ENCODE measurements at regions of chr1 and their contacts with region 1.

Region 1: GRCh38 chr1:86233403-86233802 is 76.8 kb upstream of the COL24A1 start:
- DNase-seq: no peak
- ATAC-seq: no peak

Region 2: DNA sequence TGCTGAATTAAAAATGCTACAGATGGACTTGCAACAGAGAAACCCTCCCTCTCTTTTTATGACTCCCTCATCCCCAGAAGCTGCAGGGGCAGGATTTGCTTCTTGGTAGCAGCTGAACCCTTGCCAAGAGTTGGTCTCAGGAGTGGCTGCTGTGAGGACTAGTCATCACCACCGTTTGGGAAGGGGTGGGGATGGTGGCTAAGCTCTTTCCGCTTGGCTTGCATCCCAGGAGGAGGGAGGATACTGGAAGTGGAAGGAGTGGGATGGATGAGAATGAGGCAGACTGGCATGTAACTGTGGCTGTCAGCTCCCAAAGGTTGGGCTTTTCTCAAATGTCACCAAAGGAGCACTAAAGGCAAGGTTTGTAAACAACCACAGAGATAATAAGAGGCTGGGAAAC is 26.1 kb before region 1 on chr1:
- intact Hi-C with region 1: loop called in 1 of 2 experiments (anchors 2 kb)
- DNase-seq: no peak
- ATAC-seq: no peak

Region 3: DNA sequence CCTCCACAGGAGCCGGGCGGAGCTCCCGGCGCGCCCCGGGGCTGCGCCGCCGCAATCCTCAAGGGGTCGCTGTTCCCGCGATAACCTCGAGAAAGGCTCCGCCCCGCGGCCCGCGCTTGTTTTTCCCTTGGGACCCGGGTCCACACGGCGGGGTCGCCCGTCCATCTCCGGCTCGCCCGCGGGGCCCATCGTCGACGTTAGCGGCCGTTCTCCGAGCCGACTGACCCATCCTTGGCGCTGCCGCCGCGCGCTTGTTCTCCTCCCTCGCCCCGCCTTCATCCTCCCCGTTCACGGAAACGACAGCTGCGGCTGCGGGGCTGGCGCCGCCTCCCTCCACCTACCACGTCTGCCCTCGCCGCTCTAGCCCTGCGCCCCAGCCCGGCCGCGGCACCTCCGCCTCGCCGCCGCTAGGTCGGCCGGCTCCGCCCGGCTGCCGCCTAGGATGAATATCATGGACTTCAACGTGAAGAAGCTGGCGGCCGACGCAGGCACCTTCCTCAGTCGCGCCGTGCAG is 471.1 kb after region 1 on chr1 and contains the start of gene SH3GLB1:
- intact Hi-C with region 1: no loop called
- DNase-seq: peak; percentile 87 to 96
- ATAC-seq: peak; percentile 87
- total RNA-seq, gene SH3GLB1: 118 to 122 TPM